OCI-LY7 (cell line): ENCODE measurements at regions of chr2 and their contacts with region 1.

Region 1: DNA sequence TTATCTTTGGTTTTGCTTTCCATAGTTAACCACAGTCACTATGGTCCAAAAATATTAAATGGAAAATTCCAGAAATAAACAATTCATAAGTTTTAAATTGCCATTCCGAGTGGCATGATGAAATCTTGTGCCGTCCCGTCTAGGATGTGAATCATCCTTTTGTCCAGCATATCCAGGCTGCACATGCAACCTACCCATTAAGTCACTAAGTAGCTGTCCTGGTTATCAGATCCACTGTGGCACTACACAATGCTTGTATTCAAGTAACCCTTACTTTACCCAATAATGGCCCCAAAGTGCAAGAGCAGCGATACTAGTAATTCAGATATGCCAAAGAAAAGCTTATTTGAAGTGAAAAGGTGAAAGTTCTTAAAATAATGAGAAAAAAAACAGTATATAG is 10.7 kb downstream of the USP34 start:
- DNase-seq: no peak
- H3K4me3 ChIP-seq: peak overlapping the region; percentile 10
- H3K27ac ChIP-seq: peak overlapping the region; percentile 21
- H3K4me1 ChIP-seq: peaks cover 100% of the 10 kb centered on the region
- CTCF ChIP-seq: no peak

Region 2: DNA sequence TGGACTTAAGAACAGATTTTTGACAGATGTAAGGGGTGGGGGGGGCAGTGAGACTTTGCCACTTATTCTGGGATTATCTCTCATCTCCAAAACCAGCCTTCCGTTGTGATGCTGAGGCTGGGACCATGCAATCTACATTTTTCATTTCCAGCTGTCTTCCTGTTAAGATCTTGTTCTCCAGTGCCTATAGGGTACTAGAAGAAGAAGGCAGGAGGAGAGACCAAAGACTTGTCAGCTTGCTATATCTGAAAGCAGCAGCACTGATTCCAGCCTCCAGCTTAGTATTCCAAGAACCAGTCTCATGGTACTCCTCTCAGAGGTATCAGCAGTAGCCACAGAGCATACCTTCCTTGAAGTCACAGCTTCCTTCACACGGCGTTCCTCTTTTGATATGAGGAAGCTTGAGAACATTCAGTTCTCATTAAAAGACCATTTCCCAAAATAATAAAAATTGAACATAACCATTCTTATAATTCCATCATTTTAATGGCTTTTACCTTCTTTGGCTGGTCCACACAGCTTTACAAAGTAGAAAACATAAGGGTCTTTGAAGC is 39.1 kb before region 1 on chr2:
- CTCF ChIA-PET with region 1: no interaction called
- POLR2A ChIA-PET with region 1: interaction called, 18 read pairs
- intact Hi-C with region 1: no loop called
- DNase-seq: peak; percentile 44
- H3K4me3 ChIP-seq: peak overlapping the region; percentile 57
- H3K27ac ChIP-seq: peak overlapping the region; percentile 98
- H3K4me1 ChIP-seq: peaks cover 83% of the 10 kb centered on the region
- CTCF ChIP-seq: no peak

Region 3: DNA sequence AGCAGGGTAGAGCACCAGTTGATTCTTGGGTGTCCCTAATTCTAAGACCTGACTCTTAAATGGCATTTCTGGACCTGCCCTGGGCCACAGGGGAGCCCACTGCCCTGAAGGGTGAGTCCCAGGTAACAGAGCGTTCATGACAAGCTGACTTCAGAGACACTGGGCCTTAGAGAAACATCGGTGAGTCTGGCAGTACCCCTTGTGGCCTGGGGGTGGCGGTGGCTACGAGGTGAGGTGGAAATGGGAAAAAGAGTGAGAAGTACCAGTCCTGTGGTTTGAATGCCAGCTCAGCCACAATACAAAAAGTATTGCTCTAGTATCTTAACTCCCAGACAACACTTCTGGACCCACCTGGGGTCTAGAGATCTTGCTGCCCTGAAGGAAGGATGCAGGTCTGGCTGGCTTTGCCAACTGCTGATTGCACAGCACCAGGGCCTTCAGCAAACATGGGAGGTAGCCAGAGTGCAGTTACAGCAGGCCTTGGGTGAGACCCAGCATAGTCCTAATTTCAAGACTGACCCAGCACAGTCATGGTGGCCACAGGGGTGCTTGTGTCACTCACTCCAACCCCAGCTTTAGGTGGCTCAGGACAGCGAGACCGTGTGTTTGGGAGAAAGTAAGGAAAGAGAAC is 33.8 kb before region 1 on chr2:
- CTCF ChIA-PET with region 1: no interaction called
- POLR2A ChIA-PET with region 1: interaction called, 18 read pairs
- intact Hi-C with region 1: no loop called
- DNase-seq: peak; percentile 89
- H3K4me3 ChIP-seq: peak overlapping the region; percentile 57
- H3K27ac ChIP-seq: peak overlapping the region; percentile 98
- H3K4me1 ChIP-seq: peaks cover 85% of the 10 kb centered on the region
- CTCF ChIP-seq: peak; percentile 90

Region 4: GRCh38 chr2:61443342-61444041 is 16.7 kb before region 1 on chr2:
- CTCF ChIA-PET with region 1: interaction called, 4 read pairs
- POLR2A ChIA-PET with region 1: interaction called, 31 read pairs
- intact Hi-C with region 1: no loop called
- DNase-seq: peak; percentile 79
- H3K4me3 ChIP-seq: peak overlapping the region; percentile 63
- H3K27ac ChIP-seq: peak overlapping the region; percentile 94
- H3K4me1 ChIP-seq: peaks cover 99% of the 10 kb centered on the region
- CTCF ChIP-seq: no peak

Region 5: GRCh38 chr2:61470965-61471904 is 11.1 kb after region 1 on chr2 and contains the start of gene USP34:
- CTCF ChIA-PET with region 1: no interaction called
- POLR2A ChIA-PET with region 1: interaction called, 10 read pairs
- intact Hi-C with region 1: no loop called
- DNase-seq: peak; percentile 92
- H3K4me3 ChIP-seq: peak within 1 kb of the TSS; percentile 91
- H3K27ac ChIP-seq: peak within 1 kb of the TSS; percentile 90
- H3K4me1 ChIP-seq: peaks cover 32% of the 10 kb centered on the region
- CTCF ChIP-seq: no peak
- total RNA-seq, gene USP34: 147 and 192 TPM in 2 replicates